ENCODE measurements at regions of chr4 and their contacts with region 1.

Region 1: GRCh38 chr4:185238215-185238681 is 28.9 kb downstream of the SNX25 start:
- DNase-seq: no peak
- H3K4me3 Mint-ChIP-seq: no peak overlapping the region
- H3K27ac Mint-ChIP-seq: peak overlapping the region; percentile 73
- H3K4me1 Mint-ChIP-seq: peaks cover 10% of the 10 kb centered on the region
- H3K27me3 Mint-ChIP-seq: no peaks in the 10 kb centered on the region

Region 2: DNA sequence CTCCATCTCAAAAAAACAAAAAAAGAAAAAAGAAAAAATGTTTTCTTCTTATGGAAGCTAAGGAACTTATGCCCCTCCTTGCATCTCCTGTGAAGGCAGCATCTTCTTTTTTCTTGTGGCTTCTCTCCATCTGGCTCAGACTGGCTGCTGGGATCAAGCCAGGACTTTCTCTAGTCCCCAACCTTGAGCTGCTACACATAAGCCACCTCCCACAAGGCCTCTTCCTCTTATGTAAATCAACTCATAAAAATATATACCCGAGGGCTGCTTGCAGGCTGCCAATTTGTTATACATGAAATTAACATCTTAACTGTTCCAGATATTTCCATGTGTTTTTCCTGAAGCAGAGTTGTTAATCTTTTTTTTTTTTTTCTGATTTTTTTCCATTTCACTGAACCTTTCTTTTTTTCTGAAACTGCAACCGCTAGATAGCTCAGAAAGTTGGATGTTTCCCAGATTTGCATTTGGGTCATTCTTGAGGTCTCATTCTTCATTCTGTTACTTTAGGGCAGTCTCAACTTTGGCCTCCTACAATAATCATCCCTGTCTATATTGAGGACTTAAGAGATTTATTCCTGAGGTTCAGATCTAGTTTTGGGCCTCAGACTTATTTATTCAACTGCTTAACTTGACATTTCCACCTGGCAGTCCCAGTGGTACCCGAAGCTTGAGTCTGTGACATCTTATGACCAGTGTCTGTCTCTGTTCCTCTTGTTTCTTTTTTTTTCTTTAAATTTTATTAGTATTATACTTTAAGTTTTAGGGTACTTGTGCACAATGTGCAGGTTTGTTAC is 18.5 kb before region 1 on chr4:
- intact Hi-C with region 1: loop called (anchors 1 kb)
- DNase-seq: no peak
- H3K4me3 Mint-ChIP-seq: no peak overlapping the region
- H3K27ac Mint-ChIP-seq: peak overlapping the region; percentile 8
- H3K4me1 Mint-ChIP-seq: peaks cover 16% of the 10 kb centered on the region
- H3K27me3 Mint-ChIP-seq: no peaks in the 10 kb centered on the region

Region 3: DNA sequence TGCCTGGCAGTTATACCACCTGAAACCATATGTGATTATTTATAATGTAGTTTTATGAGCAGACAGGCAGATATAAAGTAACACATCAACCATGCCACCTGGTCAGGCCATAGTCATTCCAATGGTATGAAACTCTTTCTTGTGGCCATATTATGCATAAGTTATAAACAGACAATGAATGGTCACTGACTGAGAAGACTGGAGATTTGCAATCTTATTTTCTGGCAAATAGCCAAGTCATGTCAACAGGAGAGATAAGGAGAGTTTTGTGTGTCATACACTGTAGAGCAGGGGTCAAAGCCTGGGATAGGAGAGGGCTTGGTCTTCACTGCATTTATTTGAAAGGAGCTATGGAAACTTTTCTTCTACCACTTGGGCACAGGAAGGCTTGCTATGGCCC is 544.3 kb after region 1 on chr4:
- intact Hi-C with region 1: no loop called
- DNase-seq: no peak
- H3K4me3 Mint-ChIP-seq: no peak overlapping the region
- H3K27ac Mint-ChIP-seq: no peak overlapping the region
- H3K4me1 Mint-ChIP-seq: no peaks in the 10 kb centered on the region
- H3K27me3 Mint-ChIP-seq: no peaks in the 10 kb centered on the region